Posterior vena cava (tissue), 2 donors: ENCODE measurements at regions of chr1 and their contacts with region 1.

Region 1: DNA sequence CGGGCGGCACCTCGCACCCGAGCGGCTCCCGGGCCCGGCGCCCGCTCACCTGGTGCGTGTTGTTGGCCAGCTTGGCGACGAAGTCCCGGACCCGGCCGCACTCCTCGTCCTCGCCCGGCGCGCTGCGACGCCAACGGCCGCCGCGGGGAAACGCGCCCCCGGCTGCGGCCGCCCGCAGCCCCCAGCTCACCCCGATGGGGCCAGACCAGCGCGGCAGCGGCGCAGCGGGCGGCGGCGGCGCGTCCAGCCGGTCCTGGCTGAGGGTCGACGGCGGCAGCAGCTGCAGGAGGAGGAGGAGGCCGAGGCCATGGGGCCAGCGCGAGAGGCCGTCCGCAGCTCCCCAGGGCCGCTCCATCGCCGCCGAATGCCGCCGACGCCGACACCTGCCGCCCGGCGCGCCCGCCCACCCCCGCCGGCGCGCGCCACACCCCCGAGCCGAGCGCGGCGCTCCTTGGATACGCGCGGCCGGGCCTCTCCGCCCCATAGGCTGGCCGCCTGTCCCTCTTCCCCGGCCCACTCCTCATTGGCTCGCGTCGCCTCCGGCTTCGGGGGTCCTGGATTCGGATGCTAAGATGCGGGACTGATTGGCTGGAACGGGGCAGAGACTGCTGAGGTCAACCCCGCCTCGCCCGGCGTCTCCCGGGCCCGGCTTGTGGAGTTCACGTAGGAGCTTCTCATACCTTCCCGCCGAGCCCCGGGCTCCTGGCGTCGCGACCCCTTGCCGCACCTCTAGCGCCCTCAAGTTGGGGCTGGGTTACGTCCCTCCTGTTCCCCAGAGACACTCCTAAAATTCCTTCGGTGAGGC is at the start of gene SORT1:
- DNase-seq: peak; percentile 92
- total RNA-seq, gene SORT1: 102 to 125 TPM

Region 2: GRCh38 chr1:109277434-109278204 is 120.1 kb before region 1 on chr1:
- intact Hi-C with region 1: loop called (anchors 2 kb)
- DNase-seq: no peak

Region 3: GRCh38 chr1:109357616-109358015 is 40.1 kb before region 1 on chr1:
- intact Hi-C with region 1: loop called in 1 of 2 experiments (anchors 5 kb)
- DNase-seq: no peak

Region 4: GRCh38 chr1:109493805-109494539 is 96.2 kb after region 1 on chr1 and contains the start of gene CYB561D1:
- intact Hi-C with region 1: no loop called
- DNase-seq: peak; percentile 96
- total RNA-seq, gene CYB561D1: 10.5 to 11.3 TPM